ENCODE measurements at regions of chr16 and their contacts with region 1.

Region 1: DNA sequence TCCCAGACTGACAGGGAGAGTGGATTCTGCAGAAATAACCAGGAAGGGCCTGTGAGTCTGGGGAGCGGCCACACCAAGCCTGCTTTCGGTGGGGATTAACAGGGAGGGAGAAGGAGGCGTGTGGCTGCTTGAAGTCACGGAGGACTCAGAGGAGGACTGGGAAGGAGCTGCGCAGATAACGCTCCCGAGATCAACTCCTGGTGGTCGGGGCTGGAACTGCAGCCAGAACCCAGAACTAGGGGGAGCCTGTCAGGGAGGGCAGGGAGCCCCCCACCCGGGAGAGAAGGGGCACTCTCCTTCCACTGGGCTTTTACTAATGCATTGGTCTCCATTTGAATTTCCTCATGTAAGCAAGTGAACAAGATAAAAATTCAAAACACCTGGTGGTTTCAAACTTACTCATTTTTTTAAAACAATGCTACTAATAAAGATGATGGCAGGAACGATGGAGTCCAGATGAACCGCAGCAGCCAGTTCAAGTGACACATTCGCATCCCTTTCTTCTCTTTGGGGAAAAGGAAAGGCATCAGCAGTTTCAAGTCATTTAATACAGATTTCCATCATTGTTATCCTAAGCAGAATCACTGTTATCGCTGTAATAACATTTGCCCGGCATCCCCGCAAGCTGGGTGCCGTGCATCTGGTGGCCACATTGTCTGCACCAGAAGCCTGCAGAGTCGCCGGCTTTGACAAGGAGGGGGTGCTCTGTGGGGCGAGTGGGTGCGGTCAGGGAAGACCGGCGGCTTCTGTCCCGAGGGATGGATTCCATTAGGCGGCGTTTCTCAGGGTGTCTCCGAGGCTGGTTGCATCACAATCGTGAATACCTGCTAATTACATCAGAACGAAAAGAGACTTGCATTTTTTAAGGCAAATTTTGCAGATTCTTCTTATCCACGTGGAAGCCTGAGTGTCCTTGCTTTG is 183.0 kb downstream of the FOXL1 start:
- DNase-seq: peak; percentile 73
- H3K4me3 ChIP-seq: peak overlapping the region; percentile 30 to 64; a peak in 3 of 4 replicates
- H3K27ac ChIP-seq: peak overlapping the region in 1 of 2 experiments; percentile 48; a peak in 2 of 4 replicates
- H3K4me1 ChIP-seq: peaks cover 0 to 11% of the 10 kb centered on the region in 2 experiments; a peak in 2 of 4 replicates
- H3K27me3 ChIP-seq: no peaks in the 10 kb centered on the region
- CTCF ChIP-seq: peak; percentile 94
- EP300 ChIP-seq: no peak; a peak in 2 of 4 replicates
- RAD21 ChIP-seq: peak; percentile 34

Region 2: GRCh38 chr16:86751076-86752030 is 10.0 kb before region 1 on chr16:
- CTCF ChIA-PET with region 1: interaction called, 11 read pairs
- POLR2A ChIA-PET with region 1: no interaction called
- DNase-seq: no peak
- H3K4me3 ChIP-seq: peak overlapping the region in 1 of 2 experiments; percentile 38; a peak in 1 of 4 replicates
- H3K27ac ChIP-seq: peak overlapping the region in 1 of 2 experiments; percentile 91; a peak in 2 of 4 replicates
- H3K4me1 ChIP-seq: peaks cover 0 to 26% of the 10 kb centered on the region in 2 experiments; a peak in 2 of 4 replicates
- H3K27me3 ChIP-seq: no peaks in the 10 kb centered on the region
- CTCF ChIP-seq: no peak
- EP300 ChIP-seq: 0 out of 4 replicates have a peak, but pooled peaks of 1 of the 2 experiments have one; percentile 11
- RAD21 ChIP-seq: no peak

Region 3: DNA sequence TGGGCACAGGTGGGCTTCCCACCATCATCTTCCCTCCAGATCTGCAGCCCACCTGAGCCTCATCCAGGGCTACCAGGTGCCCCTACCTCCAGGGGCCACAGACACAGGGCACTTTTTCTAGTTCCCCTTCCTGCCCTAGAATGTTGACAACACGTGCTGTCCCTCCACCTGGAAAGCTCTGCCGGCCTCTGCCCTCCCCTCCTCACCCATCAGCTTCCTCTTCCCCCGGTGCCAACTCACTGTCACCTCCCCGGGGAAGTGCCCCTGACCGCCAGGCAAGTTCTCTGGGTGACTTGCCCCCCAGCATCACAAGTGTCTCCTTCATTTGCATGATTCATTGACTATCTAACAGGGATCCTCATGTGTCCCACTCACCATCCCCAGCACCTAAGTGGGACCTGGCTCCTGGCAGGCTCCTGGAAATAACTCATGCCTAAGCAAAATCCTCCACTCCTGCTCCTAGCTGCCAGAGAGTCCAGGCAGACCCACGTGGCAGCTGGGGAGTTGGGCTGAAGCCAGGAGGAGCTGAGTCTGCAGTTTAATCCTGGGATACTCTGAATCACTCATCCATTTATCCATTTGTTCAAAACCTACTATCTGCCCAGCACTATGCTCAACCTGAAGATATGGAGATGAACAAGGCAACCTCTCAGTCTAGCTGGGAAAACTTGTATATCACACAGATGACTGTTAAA is 121.4 kb after region 1 on chr16:
- CTCF ChIA-PET with region 1: no interaction called
- POLR2A ChIA-PET with region 1: no interaction called
- DNase-seq: no peak
- H3K4me3 ChIP-seq: no peak overlapping the region
- H3K27ac ChIP-seq: no peak overlapping the region
- H3K4me1 ChIP-seq: peaks cover 0 to 6% of the 10 kb centered on the region in 2 experiments; a peak in 1 of 4 replicates
- H3K27me3 ChIP-seq: peaks cover 74% of the 10 kb centered on the region; the same call in 1 of the 2 replicates
- CTCF ChIP-seq: no peak
- EP300 ChIP-seq: no peak
- RAD21 ChIP-seq: no peak